ENCODE measurements at regions of chr16 and their contacts with region 1.

Region 1: GRCh38 chr16:4475880-4476788 is at the start of gene HMOX2:
- DNase-seq: peak; percentile 85 to 98 (median 92)
- ATAC-seq: peak; percentile 95
- H3K4me3 ChIP-seq: peak within 1 kb of the TSS; percentile 89
- H3K4me3 Mint-ChIP-seq: peak within 1 kb of the TSS; percentile 90 to 96 (median 94)
- H3K27ac ChIP-seq: peak within 1 kb of the TSS; percentile 92
- H3K27ac Mint-ChIP-seq: peak within 1 kb of the TSS; percentile 83 to 95 (median 91)
- H3K4me1 ChIP-seq: peaks cover 29 to 38% of the 10 kb centered on the region in 2 donors
- H3K4me1 Mint-ChIP-seq: peaks cover 25 to 53% (median 40%) of the 10 kb centered on the region in 7 donors
- H3K27me3 ChIP-seq: no peaks in the 10 kb centered on the region
- H3K27me3 Mint-ChIP-seq: no peaks in the 10 kb centered on the region
- total RNA-seq, gene HMOX2: 44.6 to 84.9 (median 61.0) TPM

Region 2: GRCh38 chr16:4350787-4351659 is 125.1 kb before region 1 on chr16 and contains the start of gene PAM16:
- CTCF ChIA-PET with region 1: no interaction called
- POLR2A ChIA-PET with region 1: no interaction called
- intact Hi-C with region 1: loop called in 1 of 2 experiments (anchors 2 kb)
- DNase-seq: peak; percentile 95 to 99 (median 98)
- ATAC-seq: peak; percentile 93
- H3K4me3 ChIP-seq: peak within 1 kb of the TSS; percentile 91
- H3K4me3 Mint-ChIP-seq: peak within 1 kb of the TSS; percentile 90 to 98 (median 94)
- H3K27ac ChIP-seq: peak within 1 kb of the TSS; percentile 87
- H3K27ac Mint-ChIP-seq: peak within 1 kb of the TSS; percentile 76 to 95 (median 92)
- H3K4me1 ChIP-seq: peaks cover 5 to 7% of the 10 kb centered on the region in 2 donors
- H3K4me1 Mint-ChIP-seq: peaks cover 11 to 38% (median 32%) of the 10 kb centered on the region in 7 donors
- H3K27me3 ChIP-seq: no peaks in the 10 kb centered on the region
- H3K27me3 Mint-ChIP-seq: no peaks in the 10 kb centered on the region
- total RNA-seq, gene PAM16: 34.1 to 46.2 (median 45.0) TPM

Region 3: GRCh38 chr16:4416200-4417032 is 59.7 kb before region 1 on chr16 and contains the start of gene CORO7:
- CTCF ChIA-PET with region 1: interaction called, 3 read pairs
- POLR2A ChIA-PET with region 1: interaction called, 5 read pairs
- intact Hi-C with region 1: loop called (anchors 1 kb)
- DNase-seq: peak; percentile 98 to 100 (median 99)
- ATAC-seq: peak; percentile 89
- H3K4me3 ChIP-seq: peak within 1 kb of the TSS; percentile 71
- H3K4me3 Mint-ChIP-seq: peak within 1 kb of the TSS; percentile 88 to 98 (median 95)
- H3K27ac ChIP-seq: peak within 1 kb of the TSS; percentile 98
- H3K27ac Mint-ChIP-seq: peak within 1 kb of the TSS; percentile 91 to 99 (median 98)
- H3K4me1 ChIP-seq: peaks cover 26 to 33% of the 10 kb centered on the region in 2 donors
- H3K4me1 Mint-ChIP-seq: peaks cover 18 to 43% (median 38%) of the 10 kb centered on the region in 7 donors
- H3K27me3 ChIP-seq: no peaks in the 10 kb centered on the region
- H3K27me3 Mint-ChIP-seq: peaks cover 0 to 9% (median 0%) of the 10 kb centered on the region in 5 donors
- total RNA-seq, gene CORO7: 114 to 572 (median 165) TPM

Region 4: DNA sequence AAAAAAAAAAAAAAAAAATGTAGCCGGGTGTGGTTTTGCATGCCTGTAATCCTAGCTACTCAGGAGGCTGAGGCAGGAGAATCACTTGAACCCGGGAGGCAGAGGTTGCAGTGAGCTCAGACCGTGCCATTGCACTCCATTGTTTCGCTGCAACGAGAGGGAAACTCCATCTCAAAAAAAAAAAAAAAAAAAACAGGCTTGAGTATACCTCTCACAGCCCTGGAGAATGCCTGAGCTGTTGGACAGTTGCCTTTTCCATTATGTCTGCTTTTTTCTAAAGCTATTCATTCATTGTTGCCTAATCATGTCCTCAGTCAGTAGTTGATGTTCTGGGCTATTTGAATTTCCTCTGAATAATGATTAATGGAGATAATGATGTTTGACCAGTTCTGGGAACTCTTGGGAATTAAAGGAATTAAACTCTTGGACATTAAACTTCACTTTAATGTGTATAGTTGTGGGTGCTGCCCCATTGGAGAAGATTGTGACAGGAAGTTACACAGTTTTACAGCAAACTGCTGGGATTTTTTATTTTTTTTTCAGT is 11.9 kb after region 1 on chr16:
- CTCF ChIA-PET with region 1: interaction called, 10 read pairs
- POLR2A ChIA-PET with region 1: interaction called, 64 read pairs
- intact Hi-C with region 1: loop called (anchors 1 kb)
- DNase-seq: peak in 5 of 9 donors; percentile 26 to 59 (median 40)
- ATAC-seq: peak; percentile 58
- H3K4me3 ChIP-seq: peak overlapping the region; percentile 32
- H3K4me3 Mint-ChIP-seq: peak overlapping the region; percentile 62 to 87 (median 81)
- H3K27ac ChIP-seq: peak overlapping the region; percentile 69
- H3K27ac Mint-ChIP-seq: peak overlapping the region; percentile 92 to 98 (median 96)
- H3K4me1 ChIP-seq: peaks cover 55 to 68% of the 10 kb centered on the region in 2 donors
- H3K4me1 Mint-ChIP-seq: peaks cover 43 to 72% (median 57%) of the 10 kb centered on the region in 7 donors
- H3K27me3 ChIP-seq: no peaks in the 10 kb centered on the region
- H3K27me3 Mint-ChIP-seq: no peaks in the 10 kb centered on the region

Region 5: DNA sequence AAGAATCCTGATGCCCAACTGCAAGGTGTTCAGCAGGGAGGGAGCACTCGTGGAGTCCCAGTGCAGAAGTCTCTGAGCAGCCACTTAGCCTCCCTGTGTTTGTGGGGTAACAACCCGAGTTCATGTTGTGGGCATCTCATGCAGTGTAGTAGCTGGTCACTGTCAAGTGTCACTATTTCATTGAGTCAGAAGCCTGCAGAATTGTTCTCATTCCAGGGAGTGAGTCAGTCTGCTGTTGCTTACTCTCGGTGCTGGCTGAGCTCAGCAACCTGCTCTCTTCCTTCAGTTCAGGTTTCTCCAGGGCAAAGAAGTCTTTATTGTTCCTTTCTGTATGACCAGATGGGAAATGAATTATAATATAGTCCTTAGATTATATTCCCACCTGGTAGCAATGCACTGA is 24.1 kb after region 1 on chr16:
- CTCF ChIA-PET with region 1: interaction called, 71 read pairs
- POLR2A ChIA-PET with region 1: interaction called, 216 read pairs
- intact Hi-C with region 1: loop called (anchors 1 kb)
- DNase-seq: no peak
- ATAC-seq: no peak
- H3K4me3 ChIP-seq: no peak overlapping the region
- H3K4me3 Mint-ChIP-seq: peak overlapping the region in 6 of 10 donors; percentile 38 to 83 (median 60)
- H3K27ac ChIP-seq: peak overlapping the region; percentile 61
- H3K27ac Mint-ChIP-seq: peak overlapping the region in 8 of 9 donors; percentile 49 to 100 (median 94)
- H3K4me1 ChIP-seq: peaks cover 31 to 85% of the 10 kb centered on the region in 2 donors
- H3K4me1 Mint-ChIP-seq: peaks cover 55 to 98% (median 88%) of the 10 kb centered on the region in 7 donors
- H3K27me3 ChIP-seq: no peaks in the 10 kb centered on the region
- H3K27me3 Mint-ChIP-seq: no peaks in the 10 kb centered on the region

Region 6: GRCh38 chr16:4538350-4539235 is 62.5 kb after region 1 on chr16 and contains the start of gene CDIP1:
- CTCF ChIA-PET with region 1: interaction called, 4 read pairs
- POLR2A ChIA-PET with region 1: interaction called, 11 read pairs
- intact Hi-C with region 1: loop called (anchors 1 to 2 kb)
- DNase-seq: peak; percentile 85 to 93 (median 90)
- ATAC-seq: peak; percentile 92
- H3K4me3 ChIP-seq: peak within 1 kb of the TSS; percentile 81
- H3K4me3 Mint-ChIP-seq: peak within 1 kb of the TSS; percentile 66 to 91 (median 82)
- H3K27ac ChIP-seq: peak within 1 kb of the TSS; percentile 96
- H3K27ac Mint-ChIP-seq: peak within 1 kb of the TSS; percentile 78 to 97 (median 92)
- H3K4me1 ChIP-seq: peaks cover 10 to 33% of the 10 kb centered on the region in 2 donors
- H3K4me1 Mint-ChIP-seq: peaks cover 24 to 44% (median 40%) of the 10 kb centered on the region in 7 donors
- H3K27me3 ChIP-seq: no peaks in the 10 kb centered on the region
- H3K27me3 Mint-ChIP-seq: peaks cover 0 to 9% (median 0%) of the 10 kb centered on the region in 5 donors
- total RNA-seq, gene CDIP1: 28.1 to 41.1 (median 31.0) TPM

Region 7: DNA sequence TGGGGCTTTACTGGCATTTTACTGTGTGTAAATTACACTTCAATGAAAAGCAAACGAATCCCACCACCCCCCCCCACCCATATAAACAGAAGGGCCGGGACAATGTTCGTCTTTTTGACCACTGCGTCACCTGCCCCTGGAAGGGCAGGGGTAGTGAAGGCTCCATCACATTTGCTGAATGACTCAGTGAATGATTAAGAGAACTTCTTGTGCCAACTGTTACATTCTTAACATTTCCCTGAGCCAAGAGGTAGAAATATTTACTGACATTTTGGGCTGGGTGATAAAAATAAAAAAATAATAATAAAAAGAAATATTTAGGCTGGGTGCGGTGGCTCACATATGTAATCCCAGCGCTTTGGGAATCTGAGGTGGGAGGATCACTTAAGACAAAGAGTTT is 104.1 kb after region 1 on chr16:
- CTCF ChIA-PET with region 1: no interaction called
- POLR2A ChIA-PET with region 1: no interaction called
- intact Hi-C with region 1: loop called in 1 of 2 experiments (anchors 1 kb)
- DNase-seq: no peak
- ATAC-seq: no peak
- H3K4me3 ChIP-seq: no peak overlapping the region
- H3K4me3 Mint-ChIP-seq: no peak overlapping the region
- H3K27ac ChIP-seq: no peak overlapping the region
- H3K27ac Mint-ChIP-seq: no peak overlapping the region
- H3K4me1 ChIP-seq: no peaks in the 10 kb centered on the region
- H3K4me1 Mint-ChIP-seq: no peaks in the 10 kb centered on the region
- H3K27me3 ChIP-seq: no peaks in the 10 kb centered on the region
- H3K27me3 Mint-ChIP-seq: no peaks in the 10 kb centered on the region